CD8-positive, alpha-beta T cell (primary cell): ENCODE measurements at regions of chr3 and their contacts with region 1.

Region 1: DNA sequence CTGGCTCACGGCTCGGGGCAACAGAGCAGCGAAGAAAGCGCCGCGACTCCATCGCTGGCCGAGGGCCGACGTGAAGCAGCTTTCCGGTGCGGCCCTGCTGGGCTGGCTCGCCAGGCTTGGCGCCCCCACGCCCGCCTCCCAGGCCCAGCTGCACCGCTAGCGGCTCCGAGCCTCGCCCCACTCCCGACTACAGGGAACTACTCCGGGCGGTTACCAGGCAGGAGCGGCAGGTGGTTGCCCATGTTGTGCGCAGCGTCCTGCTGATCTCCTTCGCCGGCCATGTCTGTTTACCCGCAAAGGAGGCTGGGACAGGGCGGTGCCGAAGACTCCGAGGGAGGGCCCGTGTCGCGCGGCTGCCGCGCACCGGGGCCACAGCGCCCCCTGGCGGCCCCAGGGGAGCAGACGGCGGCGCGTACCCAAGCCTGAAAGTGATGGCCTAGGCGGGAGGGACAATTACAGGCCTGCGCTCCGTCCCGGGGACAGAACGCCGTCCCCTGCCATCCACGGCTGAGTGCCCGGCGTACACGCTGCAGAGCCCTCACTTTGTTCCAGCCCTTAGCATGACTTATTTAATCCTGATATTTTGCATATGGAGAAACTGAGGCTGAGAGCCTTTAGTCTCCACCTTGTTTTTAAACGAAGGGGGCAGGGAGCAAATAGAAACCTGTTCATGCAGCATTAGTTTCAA is at the start of gene CRBN:
- DNase-seq: peak; percentile 80 to 94 (median 88)
- ATAC-seq: peak; percentile 96
- H3K4me3 ChIP-seq: peak within 1 kb of the TSS; percentile 70 to 87
- H3K4me3 Mint-ChIP-seq: peak within 1 kb of the TSS; percentile 89
- H3K27ac ChIP-seq: peak within 1 kb of the TSS; percentile 77 to 80
- H3K27ac Mint-ChIP-seq: peak within 1 kb of the TSS; percentile 91
- H3K4me1 ChIP-seq: peaks cover 47% of the 10 kb centered on the region
- H3K4me1 Mint-ChIP-seq: peaks cover 43% of the 10 kb centered on the region
- H3K27me3 ChIP-seq: no peaks in the 10 kb centered on the region
- H3K27me3 Mint-ChIP-seq: no peaks in the 10 kb centered on the region
- CTCF ChIP-seq: peak; percentile 90
- total RNA-seq, gene CRBN: 143 to 144 TPM

Region 2: DNA sequence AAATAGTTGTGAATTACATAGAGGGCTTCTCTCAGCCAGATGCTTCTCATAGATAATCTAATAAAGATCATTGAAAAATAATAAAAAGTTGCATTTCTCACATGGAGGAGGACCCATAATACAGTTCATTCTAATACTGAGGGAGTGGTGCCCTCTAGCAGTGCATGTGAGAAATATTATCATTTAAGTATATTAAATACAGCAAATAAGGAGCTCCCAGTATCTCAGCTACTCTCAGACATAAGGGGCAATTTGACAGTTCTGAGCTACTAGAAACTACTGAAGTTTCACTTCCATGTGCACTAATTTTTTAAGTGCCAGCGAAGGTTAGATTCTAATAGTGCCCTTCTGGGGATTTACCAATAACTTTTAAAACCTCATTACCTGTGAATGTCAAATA is 257.6 kb before region 1 on chr3:
- CTCF ChIA-PET with region 1: no interaction called
- POLR2A ChIA-PET with region 1: no interaction called
- intact Hi-C with region 1: loop called in 1 of 2 experiments (anchors 10 kb)
- DNase-seq: peak in 2 of 9 experiments; percentile 6 to 27
- ATAC-seq: no peak
- H3K4me3 ChIP-seq: no peak overlapping the region
- H3K4me3 Mint-ChIP-seq: no peak overlapping the region
- H3K27ac ChIP-seq: no peak overlapping the region
- H3K27ac Mint-ChIP-seq: no peak overlapping the region
- H3K4me1 ChIP-seq: no peaks in the 10 kb centered on the region
- H3K4me1 Mint-ChIP-seq: no peaks in the 10 kb centered on the region
- H3K27me3 ChIP-seq: no peaks in the 10 kb centered on the region
- H3K27me3 Mint-ChIP-seq: no peaks in the 10 kb centered on the region
- CTCF ChIP-seq: no peak

Region 3: DNA sequence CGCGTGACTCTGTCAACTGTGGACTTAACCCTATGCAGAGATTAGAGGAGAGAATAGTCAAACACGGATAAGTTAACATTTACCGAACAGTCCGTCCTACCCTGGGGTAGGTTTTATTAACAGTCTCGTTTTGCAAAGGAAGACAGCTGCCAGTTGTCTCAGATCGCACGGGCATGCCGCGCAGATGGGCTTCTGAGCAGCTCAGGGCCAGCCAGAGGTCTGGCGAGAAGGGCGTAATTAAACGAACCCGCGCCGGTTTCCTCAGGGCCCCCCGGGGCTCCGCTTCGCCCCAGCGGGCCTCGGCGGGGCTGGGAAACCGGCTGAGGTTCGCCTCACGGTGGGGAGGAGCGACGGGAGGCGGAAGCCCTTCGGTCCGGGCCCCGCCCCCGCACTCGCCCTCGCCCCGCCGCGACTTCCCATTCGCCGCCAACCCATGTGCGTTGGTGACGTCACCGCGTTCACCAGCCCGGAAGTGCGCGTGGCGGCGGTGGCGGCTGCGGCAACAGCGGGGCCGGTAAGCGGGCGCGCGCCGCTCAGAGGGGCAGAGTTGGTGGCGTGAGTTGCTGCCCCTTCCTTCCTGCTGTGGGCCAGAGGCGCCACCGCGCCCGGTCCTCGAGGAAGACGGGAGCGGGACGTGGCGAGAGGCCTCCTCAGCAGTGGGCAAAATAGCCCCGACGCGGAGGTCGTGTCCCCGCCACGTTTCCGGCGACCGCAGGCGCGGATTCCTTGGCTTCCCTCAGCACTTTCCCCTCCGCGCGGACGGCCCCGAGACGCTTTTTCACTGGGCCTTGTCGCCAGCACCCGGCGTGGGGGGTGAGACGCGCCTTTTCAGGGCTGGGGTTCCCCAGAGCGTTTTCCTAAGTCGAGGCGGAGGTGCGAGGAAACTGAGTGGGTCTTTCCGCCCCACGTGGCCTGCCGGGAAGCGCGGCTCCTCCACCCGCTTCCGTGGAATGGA is 52.8 kb before region 1 on chr3 and contains the start of gene TRNT1:
- CTCF ChIA-PET with region 1: no interaction called
- POLR2A ChIA-PET with region 1: interaction called, 3 read pairs
- intact Hi-C with region 1: loop called (anchors 1 kb)
- DNase-seq: peak; percentile 92 to 98 (median 96)
- ATAC-seq: peak; percentile 95
- H3K4me3 ChIP-seq: peak within 1 kb of the TSS; percentile 77 to 93
- H3K4me3 Mint-ChIP-seq: peak within 1 kb of the TSS; percentile 94
- H3K27ac ChIP-seq: peak within 1 kb of the TSS; percentile 97 to 98
- H3K27ac Mint-ChIP-seq: peak within 1 kb of the TSS; percentile 98
- H3K4me1 ChIP-seq: peaks cover 38% of the 10 kb centered on the region
- H3K4me1 Mint-ChIP-seq: peaks cover 41% of the 10 kb centered on the region
- H3K27me3 ChIP-seq: no peaks in the 10 kb centered on the region
- H3K27me3 Mint-ChIP-seq: no peaks in the 10 kb centered on the region
- CTCF ChIP-seq: no peak
- total RNA-seq, gene TRNT1: 26.0 to 26.5 TPM

Region 4: DNA sequence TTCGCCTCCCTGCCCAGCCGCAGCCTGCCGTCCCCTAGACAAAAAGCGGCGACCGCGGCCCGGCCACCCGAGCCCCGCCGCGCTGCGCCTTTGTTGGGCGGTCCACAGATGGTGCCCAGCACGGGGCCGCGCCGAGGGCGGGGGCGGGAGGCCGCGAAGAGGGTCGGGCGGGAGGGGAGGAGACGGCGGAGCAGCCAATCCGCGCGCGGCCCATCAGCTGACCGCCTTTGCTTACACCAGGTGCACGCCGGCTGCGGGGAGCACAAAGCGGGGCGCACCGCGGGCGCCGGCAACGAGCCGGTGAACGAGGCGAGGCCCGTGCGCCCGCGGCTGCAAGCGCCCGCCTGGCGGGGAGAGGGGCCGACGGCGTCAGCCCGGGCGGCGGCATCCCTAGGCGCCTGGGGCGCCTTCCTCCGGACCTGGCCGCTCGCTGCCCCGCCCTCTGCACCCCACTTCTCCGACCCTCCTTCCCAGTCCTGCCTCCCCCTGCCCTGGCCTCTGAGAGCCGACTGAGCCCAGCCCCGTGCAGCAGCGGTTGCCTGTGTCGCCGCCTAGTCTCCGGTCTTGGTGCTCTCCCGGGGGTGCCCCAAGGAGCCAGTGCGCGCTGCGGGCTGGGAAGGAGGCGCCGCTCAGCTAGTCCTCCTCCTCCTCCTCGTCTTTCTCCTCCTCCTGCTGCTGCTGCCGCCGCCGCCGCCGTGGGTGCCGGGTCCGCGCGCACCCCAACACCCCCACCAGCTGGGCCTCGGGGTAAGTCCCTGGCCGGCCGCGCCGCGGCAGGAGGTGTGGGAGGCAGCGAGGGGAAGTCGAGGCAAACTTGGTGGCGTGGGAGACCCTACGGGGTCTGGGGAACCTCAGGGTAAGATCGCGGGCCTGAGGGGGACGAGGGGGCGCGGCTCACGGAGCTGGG is 619.9 kb after region 1 on chr3 and contains the start of gene LRRN1:
- CTCF ChIA-PET with region 1: no interaction called
- POLR2A ChIA-PET with region 1: no interaction called
- intact Hi-C with region 1: loop called in 1 of 2 experiments (anchors 10 kb)
- DNase-seq: peak; percentile 12 to 80 (median 57)
- ATAC-seq: peak; percentile 65
- H3K4me3 ChIP-seq: peak within 1 kb of the TSS; percentile 52 to 81
- H3K4me3 Mint-ChIP-seq: peak within 1 kb of the TSS; percentile 94
- H3K27ac ChIP-seq: peak within 1 kb of the TSS; percentile 62 to 76
- H3K27ac Mint-ChIP-seq: peak within 1 kb of the TSS; percentile 94
- H3K4me1 ChIP-seq: peaks cover 5% of the 10 kb centered on the region
- H3K4me1 Mint-ChIP-seq: peaks cover 25% of the 10 kb centered on the region
- H3K27me3 ChIP-seq: peaks cover 0 to 4% of the 10 kb centered on the region in 2 experiments
- H3K27me3 Mint-ChIP-seq: peaks cover 4% of the 10 kb centered on the region
- CTCF ChIP-seq: no peak
- total RNA-seq, gene LRRN1: 1.0 to 1.2 TPM

Region 5: DNA sequence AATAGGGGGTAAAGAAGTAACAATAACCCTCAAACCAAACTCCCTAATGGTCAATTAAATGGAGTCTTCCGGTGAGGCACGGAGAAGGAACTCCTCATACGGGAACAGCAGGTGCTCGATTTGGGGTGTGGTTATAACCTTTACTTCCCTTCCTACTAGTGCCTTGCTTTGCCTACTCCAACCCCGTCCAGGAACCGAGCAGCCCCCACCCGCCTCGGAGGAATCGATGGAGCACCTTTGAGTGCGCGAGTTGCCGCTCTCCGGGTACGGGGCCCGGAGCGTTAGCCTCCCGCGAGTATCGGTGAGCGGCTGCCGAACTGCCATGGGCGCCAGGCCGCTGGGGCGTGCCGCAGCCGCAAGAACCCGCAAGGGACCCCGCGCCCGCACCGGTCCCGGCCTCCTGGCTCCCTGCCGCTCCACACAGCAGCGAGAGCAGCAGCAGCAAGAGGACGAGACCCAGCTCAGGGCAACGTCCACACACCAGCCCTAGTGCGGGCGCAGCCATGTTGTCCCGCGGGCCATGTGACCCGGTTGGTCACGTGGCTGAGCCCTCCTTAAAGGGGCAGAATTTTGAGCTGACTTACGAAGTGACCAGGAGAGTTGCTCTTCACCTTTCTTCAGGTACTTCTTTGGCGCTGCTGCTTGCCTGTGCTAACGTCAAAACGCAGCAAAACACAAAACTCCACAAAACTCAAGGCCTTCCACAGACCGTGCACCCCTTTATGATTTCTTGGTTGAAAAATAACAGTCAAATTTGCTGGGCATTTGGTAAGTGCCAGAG is 1287.4 kb after region 1 on chr3 and contains the start of gene SUMF1:
- CTCF ChIA-PET with region 1: no interaction called
- POLR2A ChIA-PET with region 1: no interaction called
- intact Hi-C with region 1: loop called in 1 of 2 experiments (anchors 5 kb)
- DNase-seq: peak; percentile 34 to 85 (median 73)
- ATAC-seq: peak; percentile 93
- H3K4me3 ChIP-seq: peak within 1 kb of the TSS; percentile 75 to 76
- H3K4me3 Mint-ChIP-seq: peak within 1 kb of the TSS; percentile 91
- H3K27ac ChIP-seq: peak within 1 kb of the TSS; percentile 68 to 72
- H3K27ac Mint-ChIP-seq: peak within 1 kb of the TSS; percentile 95
- H3K4me1 ChIP-seq: peaks cover 13% of the 10 kb centered on the region
- H3K4me1 Mint-ChIP-seq: peaks cover 23% of the 10 kb centered on the region
- H3K27me3 ChIP-seq: no peaks in the 10 kb centered on the region
- H3K27me3 Mint-ChIP-seq: no peaks in the 10 kb centered on the region
- CTCF ChIP-seq: no peak
- total RNA-seq, gene SUMF1: 7.6 to 7.8 TPM